ENCODE measurements at regions of chr14 and their contacts with region 1.

Region 1: DNA sequence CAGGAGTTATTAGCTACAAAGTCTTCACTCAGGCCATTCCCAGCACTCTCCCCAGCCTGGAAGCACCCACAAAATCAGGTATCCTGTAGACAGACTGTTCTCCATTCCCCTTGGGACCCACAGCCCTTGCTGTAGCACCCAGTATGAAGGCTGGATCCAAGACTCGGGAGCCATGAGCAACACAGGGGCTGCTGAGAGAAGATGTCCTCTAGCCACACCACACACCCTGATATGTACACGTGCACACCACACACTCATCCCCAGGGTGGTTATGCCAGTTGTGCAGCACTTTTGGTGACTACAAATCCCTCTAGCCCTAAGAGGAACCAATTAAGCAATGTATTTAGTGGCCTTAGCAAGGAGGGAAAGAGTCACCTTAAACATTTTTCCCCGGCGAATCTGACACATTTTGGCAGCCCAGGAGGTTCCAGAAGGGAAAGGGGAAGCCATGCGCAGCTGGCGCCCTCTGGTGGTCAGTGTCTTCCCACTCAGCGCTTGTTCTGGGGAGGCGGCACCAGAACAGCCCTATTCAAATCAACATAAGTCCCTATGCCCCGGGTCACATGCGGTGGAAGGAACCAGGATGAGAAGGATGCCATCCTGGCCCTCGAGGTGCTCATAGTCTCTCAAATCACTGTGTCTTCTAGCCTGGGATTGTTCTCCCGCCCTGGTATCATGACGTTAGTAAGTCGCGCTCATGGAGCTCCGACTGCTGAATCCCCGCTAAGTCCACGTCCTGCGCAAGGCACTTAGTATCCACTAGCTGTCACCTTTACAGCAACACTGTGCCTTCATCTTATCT is 96.9 kb downstream of the GCH1 start:
- DNase-seq: peak; percentile 96
- H3K4me3 ChIP-seq: peak overlapping the region in 3 of 4 donors; percentile 8 to 21 (median 9)
- H3K27ac ChIP-seq: no peak overlapping the region
- H3K4me1 ChIP-seq: peaks cover 0 to 13% (median 10%) of the 10 kb centered on the region in 4 donors
- H3K27me3 ChIP-seq: no peaks in the 10 kb centered on the region
- CTCF ChIP-seq: peak; percentile 85 to 96 (median 93)
- EP300 ChIP-seq: no peak
- POLR2A ChIP-seq: no peak

Region 2: GRCh38 chr14:54893151-54893760 is 87.5 kb after region 1 on chr14:
- intact Hi-C with region 1: loop called (anchors 10 kb)
- DNase-seq: no peak
- H3K4me3 ChIP-seq: no peak overlapping the region
- H3K27ac ChIP-seq: no peak overlapping the region
- H3K4me1 ChIP-seq: no peaks in the 10 kb centered on the region
- H3K27me3 ChIP-seq: no peaks in the 10 kb centered on the region
- CTCF ChIP-seq: peak; percentile 54 to 79 (median 67)
- EP300 ChIP-seq: no peak
- POLR2A ChIP-seq: no peak

Measured in esophagus muscularis mucosa (tissue), 4 donors.